ENCODE measurements at regions of chr16 and their contacts with region 1.

Region 1: DNA sequence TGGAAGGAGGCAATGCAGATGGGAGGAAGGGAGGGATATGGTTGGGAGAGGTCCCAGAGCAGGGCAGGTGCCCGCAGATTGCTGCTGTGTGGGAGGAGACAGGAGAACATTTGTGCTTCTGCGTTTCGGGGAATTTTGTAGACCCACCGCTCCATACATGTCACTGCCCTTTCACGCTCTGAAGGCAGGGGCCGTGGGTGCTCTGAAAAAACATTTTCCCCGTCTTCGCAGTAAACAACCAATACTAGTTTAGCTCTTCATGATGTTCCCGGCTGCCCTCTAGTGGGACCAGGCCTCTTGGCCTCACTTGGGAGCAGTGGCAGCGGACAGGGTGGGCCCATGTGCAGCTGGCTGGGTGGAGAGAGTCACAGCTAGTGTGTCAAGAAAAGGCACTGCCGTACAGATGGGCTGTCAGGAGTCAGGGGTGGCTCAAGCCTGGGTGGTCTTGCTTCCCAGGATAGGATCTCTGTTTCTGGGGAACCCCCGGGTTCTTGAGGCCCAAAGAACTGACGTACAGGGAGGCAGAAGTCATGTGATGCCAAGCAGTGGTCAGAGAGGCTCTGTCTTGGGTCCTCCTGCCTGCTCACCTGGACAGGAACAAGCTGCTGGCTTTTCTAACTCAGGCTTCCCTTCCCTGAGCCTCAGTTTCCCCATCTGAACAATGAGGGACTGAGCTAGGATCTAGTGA is 46.5 kb upstream of the CPNE2 start:
- DNase-seq: peak; percentile 23
- ATAC-seq: peak; percentile 63
- H3K4me3 ChIP-seq: no peak overlapping the region
- H3K27ac ChIP-seq: no peak overlapping the region
- H3K4me1 ChIP-seq: no peaks in the 10 kb centered on the region
- H3K27me3 ChIP-seq: no peaks in the 10 kb centered on the region
- CTCF ChIP-seq: peak; percentile 54

Region 2: DNA sequence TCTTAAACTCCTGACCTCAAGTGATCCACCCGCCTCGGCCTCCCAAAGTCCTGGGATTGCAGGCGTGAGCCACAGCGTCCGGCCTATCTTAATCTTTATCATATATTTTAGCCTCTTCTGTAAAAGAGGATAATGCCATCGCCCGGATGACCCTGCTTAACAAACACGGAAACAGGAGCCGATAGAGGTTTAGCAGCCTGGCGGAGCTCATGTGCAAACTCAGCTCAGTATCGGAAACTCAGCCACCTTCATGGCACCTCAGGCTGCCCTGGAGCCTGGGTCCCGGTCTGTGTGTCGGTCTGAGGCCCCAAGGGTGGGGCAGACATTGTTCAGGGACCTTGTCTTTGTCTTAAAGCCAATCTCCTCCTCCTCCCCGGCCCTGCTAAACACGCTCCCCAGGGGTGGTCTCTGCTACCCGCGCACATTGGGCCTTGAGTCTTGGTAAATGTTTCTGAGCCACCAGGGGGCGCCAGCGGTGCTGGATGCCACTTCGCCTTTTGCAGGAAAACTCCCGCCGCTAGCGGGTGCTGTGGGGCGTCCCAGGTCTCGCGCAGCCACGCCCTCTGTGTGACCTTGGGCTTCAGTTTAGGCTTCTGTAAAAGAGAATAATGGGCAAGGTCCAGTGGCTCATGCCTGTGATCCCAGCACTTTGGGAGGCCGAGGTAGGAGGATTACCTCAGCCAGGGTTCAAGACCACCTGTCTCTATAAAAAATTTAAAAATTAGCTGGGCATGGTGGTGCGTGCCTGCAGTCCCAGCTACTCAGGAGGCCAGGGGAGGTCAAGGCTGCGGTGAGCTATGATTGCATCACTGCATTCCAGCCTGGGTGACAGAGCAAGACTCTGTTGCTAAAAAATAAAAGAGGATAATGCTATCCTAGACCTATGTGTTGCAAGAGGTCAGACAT is 81.3 kb before region 1 on chr16:
- CTCF ChIA-PET with region 1: no interaction called
- POLR2A ChIA-PET with region 1: no interaction called
- intact Hi-C with region 1: loop called (anchors 1 kb)
- DNase-seq: peak; percentile 76
- ATAC-seq: peak; percentile 59
- H3K4me3 ChIP-seq: no peak overlapping the region
- H3K27ac ChIP-seq: no peak overlapping the region
- H3K4me1 ChIP-seq: peaks cover 7% of the 10 kb centered on the region; the same call in 1 of the 2 replicates
- H3K27me3 ChIP-seq: no peaks in the 10 kb centered on the region
- CTCF ChIP-seq: peak; percentile 94

Region 3: GRCh38 chr16:57023541-57024249 is 22.1 kb before region 1 on chr16:
- CTCF ChIA-PET with region 1: no interaction called
- POLR2A ChIA-PET with region 1: no interaction called
- intact Hi-C with region 1: no loop called
- DNase-seq: no peak
- ATAC-seq: no peak
- H3K4me3 ChIP-seq: no peak overlapping the region
- H3K27ac ChIP-seq: no peak overlapping the region
- H3K4me1 ChIP-seq: no peaks in the 10 kb centered on the region
- H3K27me3 ChIP-seq: no peaks in the 10 kb centered on the region
- CTCF ChIP-seq: no peak

Measured in PC-3 (cell line).